ENCODE measurements at regions of chr12 and their contacts with region 1.

Region 1: GRCh38 chr12:42382013-42382680 is 56.2 kb downstream of the PPHLN1 start:
- DNase-seq: no peak
- ATAC-seq: no peak
- H3K4me3 ChIP-seq: no peak overlapping the region
- H3K27ac ChIP-seq: no peak overlapping the region
- H3K4me1 ChIP-seq: no peaks in the 10 kb centered on the region
- H3K27me3 ChIP-seq: no peaks in the 10 kb centered on the region
- CTCF ChIP-seq: no peak

Region 2: DNA sequence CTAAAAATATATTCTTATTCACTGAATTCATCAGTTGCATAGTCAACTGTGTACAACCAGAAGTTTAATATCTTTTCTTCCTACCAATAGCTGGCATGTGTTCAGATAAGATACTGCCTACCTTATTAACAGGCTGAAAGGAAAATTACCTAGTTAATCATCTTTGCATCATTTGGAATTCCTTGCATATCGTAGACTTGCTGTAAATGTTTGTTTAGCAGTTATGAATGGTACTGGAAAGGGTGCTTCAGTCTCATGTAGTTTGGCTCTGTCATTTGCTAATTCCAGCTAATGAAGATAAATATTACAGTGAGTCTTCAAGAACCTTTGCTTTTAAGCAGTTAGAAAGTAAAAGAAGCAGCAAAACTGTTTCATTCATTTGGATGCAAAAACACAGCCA is 28.2 kb after region 1 on chr12:
- CTCF ChIA-PET with region 1: no interaction called
- POLR2A ChIA-PET with region 1: interaction called, 15 read pairs
- in situ Hi-C with region 1: no loop called
- intact Hi-C with region 1: no loop called
- DNase-seq: no peak
- ATAC-seq: no peak
- H3K4me3 ChIP-seq: no peak overlapping the region
- H3K27ac ChIP-seq: no peak overlapping the region
- H3K4me1 ChIP-seq: peaks cover 6% of the 10 kb centered on the region; the same call in 1 of the 2 replicates
- H3K27me3 ChIP-seq: no peaks in the 10 kb centered on the region
- CTCF ChIP-seq: no peak

Measured in Panc1 (cell line).